Natural killer cell (primary cell): ENCODE measurements at regions of chr6 and their contacts with region 1.

Region 1: GRCh38 chr6:24902782-24903181 is 33.0 kb downstream of the RIPOR2 start:
- DNase-seq: no peak
- ATAC-seq: no peak
- H3K4me3 ChIP-seq: no peak overlapping the region
- H3K4me3 Mint-ChIP-seq: peak overlapping the region; percentile 58
- H3K27ac ChIP-seq: no peak overlapping the region
- H3K27ac Mint-ChIP-seq: peak overlapping the region; percentile 89 to 93
- H3K4me1 ChIP-seq: peaks cover 56% of the 10 kb centered on the region
- H3K4me1 Mint-ChIP-seq: peaks cover 93 to 95% of the 10 kb centered on the region in 2 donors
- H3K27me3 ChIP-seq: no peaks in the 10 kb centered on the region
- H3K27me3 Mint-ChIP-seq: no peaks in the 10 kb centered on the region
- CTCF ChIP-seq: no peak

Region 2: GRCh38 chr6:24402697-24403501 is 499.9 kb before region 1 on chr6 and contains the start of gene MRS2:
- intact Hi-C with region 1: no loop called
- DNase-seq: peak; percentile 62 to 89
- ATAC-seq: peak; percentile 89 to 94 (median 92)
- H3K4me3 ChIP-seq: peak within 1 kb of the TSS; percentile 74
- H3K4me3 Mint-ChIP-seq: peak within 1 kb of the TSS; percentile 98
- H3K27ac ChIP-seq: peak within 1 kb of the TSS; percentile 15
- H3K27ac Mint-ChIP-seq: peak within 1 kb of the TSS; percentile 84 to 87
- H3K4me1 ChIP-seq: peaks cover 10% of the 10 kb centered on the region
- H3K4me1 Mint-ChIP-seq: peaks cover 18% of the 10 kb centered on the region in 2 donors
- H3K27me3 ChIP-seq: no peaks in the 10 kb centered on the region
- H3K27me3 Mint-ChIP-seq: peaks cover 15 to 23% of the 10 kb centered on the region in 2 donors
- CTCF ChIP-seq: no peak
- total RNA-seq, gene MRS2: 9.0 to 12.8 (median 10.8) TPM

Region 3: GRCh38 chr6:24883618-24884017 is 19.2 kb before region 1 on chr6:
- intact Hi-C with region 1: loop called (anchors 2 kb)
- DNase-seq: peak in 1 of 2 donors; percentile 40
- ATAC-seq: peak in 1 of 3 donors; percentile 58
- H3K4me3 ChIP-seq: no peak overlapping the region
- H3K4me3 Mint-ChIP-seq: peak overlapping the region; percentile 18
- H3K27ac ChIP-seq: peak overlapping the region; percentile 12
- H3K27ac Mint-ChIP-seq: peak overlapping the region; percentile 90 to 93
- H3K4me1 ChIP-seq: peaks cover 42% of the 10 kb centered on the region
- H3K4me1 Mint-ChIP-seq: peaks cover 91 to 92% of the 10 kb centered on the region in 2 donors
- H3K27me3 ChIP-seq: no peaks in the 10 kb centered on the region
- H3K27me3 Mint-ChIP-seq: no peaks in the 10 kb centered on the region
- CTCF ChIP-seq: no peak

Region 4: GRCh38 chr6:25053875-25054371 is 151.1 kb after region 1 on chr6:
- intact Hi-C with region 1: no loop called
- DNase-seq: peak; percentile 30 to 70
- ATAC-seq: peak; percentile 66 to 80 (median 73)
- H3K4me3 ChIP-seq: no peak overlapping the region
- H3K4me3 Mint-ChIP-seq: peak overlapping the region; percentile 52
- H3K27ac ChIP-seq: peak overlapping the region; percentile 36
- H3K27ac Mint-ChIP-seq: peak overlapping the region; percentile 41 to 72
- H3K4me1 ChIP-seq: peaks cover 54% of the 10 kb centered on the region
- H3K4me1 Mint-ChIP-seq: peaks cover 58 to 66% of the 10 kb centered on the region in 2 donors
- H3K27me3 ChIP-seq: no peaks in the 10 kb centered on the region
- H3K27me3 Mint-ChIP-seq: no peaks in the 10 kb centered on the region
- CTCF ChIP-seq: no peak

Region 5: DNA sequence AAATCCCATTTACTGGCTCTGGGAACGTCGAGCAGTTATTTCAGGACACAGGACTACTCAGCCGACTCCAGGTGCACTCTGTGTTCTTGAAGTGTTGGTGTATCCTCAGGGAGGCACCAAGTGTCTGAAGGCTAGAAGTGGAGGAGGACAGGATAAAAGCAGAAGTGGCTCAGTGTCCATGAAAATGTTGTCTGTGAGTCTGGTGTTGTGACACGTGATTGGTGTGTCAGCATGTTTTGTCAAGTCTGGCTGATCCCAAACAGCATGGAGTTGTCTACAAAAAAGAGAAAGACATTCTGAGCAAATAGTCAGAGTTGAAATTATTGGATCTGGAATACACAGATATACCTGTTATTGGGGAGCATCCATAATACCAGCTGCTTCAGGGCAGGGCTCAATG is 779.5 kb after region 1 on chr6:
- intact Hi-C with region 1: no loop called
- DNase-seq: no peak
- ATAC-seq: no peak
- H3K4me3 ChIP-seq: no peak overlapping the region
- H3K4me3 Mint-ChIP-seq: no peak overlapping the region
- H3K27ac ChIP-seq: no peak overlapping the region
- H3K27ac Mint-ChIP-seq: no peak overlapping the region
- H3K4me1 ChIP-seq: no peaks in the 10 kb centered on the region
- H3K4me1 Mint-ChIP-seq: no peaks in the 10 kb centered on the region
- H3K27me3 ChIP-seq: peaks cover 4% of the 10 kb centered on the region
- H3K27me3 Mint-ChIP-seq: peaks cover 3 to 40% of the 10 kb centered on the region in 2 donors
- CTCF ChIP-seq: no peak